ENCODE measurements at regions of chr1 and their contacts with region 1.

Region 1: DNA sequence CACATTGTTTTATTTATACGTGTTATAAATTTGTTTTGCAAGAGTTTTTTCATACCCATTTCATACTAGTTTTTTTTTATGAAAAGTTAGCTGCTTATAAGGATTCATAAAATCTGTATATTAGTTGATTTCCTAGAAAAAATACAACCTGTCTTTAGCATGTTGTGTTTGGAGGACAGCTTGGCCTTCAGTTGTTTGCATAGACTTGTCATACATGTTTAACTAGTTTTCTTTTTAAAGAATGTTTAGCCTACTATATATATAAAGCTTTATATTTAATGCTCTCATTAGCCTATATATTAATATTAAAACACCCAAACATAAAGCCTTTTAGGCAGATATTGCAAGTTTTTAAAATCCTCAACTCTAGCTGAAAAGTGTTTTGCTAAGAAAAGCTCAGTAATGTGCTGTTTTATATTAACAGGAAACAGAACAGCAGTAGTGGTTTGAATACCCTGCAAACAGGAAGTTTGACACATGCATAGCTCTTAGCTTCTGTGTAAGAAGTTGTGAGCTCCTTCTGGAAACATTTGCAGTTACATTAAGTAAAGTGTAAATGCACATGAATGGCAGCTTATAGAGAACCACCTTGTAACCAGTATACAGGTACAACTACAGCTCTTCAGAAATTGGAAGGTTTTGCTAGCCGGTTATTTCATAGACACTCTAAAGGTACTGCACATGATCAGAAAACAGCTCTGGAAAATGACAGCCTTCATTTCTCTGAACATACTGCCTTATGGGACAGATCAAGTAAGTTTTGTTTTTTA is at the start of gene PRKACB:
- H3K4me3 Mint-ChIP-seq: peak within 1 kb of the TSS; percentile 73
- H3K27ac Mint-ChIP-seq: peak within 1 kb of the TSS; percentile 86
- H3K4me1 Mint-ChIP-seq: peaks cover 9% of the 10 kb centered on the region
- H3K27me3 Mint-ChIP-seq: no peaks in the 10 kb centered on the region

Region 2: GRCh38 chr1:83619170-83619896 is 524.6 kb before region 1 on chr1:
- intact Hi-C with region 1: no loop called
- H3K4me3 Mint-ChIP-seq: no peak overlapping the region
- H3K27ac Mint-ChIP-seq: no peak overlapping the region
- H3K4me1 Mint-ChIP-seq: no peaks in the 10 kb centered on the region
- H3K27me3 Mint-ChIP-seq: no peaks in the 10 kb centered on the region

Region 3: DNA sequence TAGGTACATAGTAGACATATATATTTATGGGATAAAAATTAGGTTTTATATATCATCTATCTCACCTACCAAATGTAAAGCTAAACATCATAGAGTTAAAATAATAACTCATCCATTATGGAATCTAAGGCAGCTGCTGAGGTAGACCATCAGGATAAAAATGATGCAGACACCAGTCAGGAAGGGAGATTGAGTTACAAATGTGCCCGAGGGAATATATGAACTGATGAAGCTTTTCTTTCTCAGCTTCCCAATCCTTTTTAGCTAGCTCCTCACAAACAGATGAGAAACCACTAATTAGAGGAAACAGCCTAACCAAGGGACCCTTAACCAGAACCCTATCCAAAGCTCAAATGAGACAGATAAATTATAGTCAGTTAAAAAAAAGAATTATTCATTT is 165.9 kb before region 1 on chr1:
- intact Hi-C with region 1: no loop called
- H3K4me3 Mint-ChIP-seq: no peak overlapping the region
- H3K27ac Mint-ChIP-seq: no peak overlapping the region
- H3K4me1 Mint-ChIP-seq: no peaks in the 10 kb centered on the region
- H3K27me3 Mint-ChIP-seq: no peaks in the 10 kb centered on the region

Region 4: DNA sequence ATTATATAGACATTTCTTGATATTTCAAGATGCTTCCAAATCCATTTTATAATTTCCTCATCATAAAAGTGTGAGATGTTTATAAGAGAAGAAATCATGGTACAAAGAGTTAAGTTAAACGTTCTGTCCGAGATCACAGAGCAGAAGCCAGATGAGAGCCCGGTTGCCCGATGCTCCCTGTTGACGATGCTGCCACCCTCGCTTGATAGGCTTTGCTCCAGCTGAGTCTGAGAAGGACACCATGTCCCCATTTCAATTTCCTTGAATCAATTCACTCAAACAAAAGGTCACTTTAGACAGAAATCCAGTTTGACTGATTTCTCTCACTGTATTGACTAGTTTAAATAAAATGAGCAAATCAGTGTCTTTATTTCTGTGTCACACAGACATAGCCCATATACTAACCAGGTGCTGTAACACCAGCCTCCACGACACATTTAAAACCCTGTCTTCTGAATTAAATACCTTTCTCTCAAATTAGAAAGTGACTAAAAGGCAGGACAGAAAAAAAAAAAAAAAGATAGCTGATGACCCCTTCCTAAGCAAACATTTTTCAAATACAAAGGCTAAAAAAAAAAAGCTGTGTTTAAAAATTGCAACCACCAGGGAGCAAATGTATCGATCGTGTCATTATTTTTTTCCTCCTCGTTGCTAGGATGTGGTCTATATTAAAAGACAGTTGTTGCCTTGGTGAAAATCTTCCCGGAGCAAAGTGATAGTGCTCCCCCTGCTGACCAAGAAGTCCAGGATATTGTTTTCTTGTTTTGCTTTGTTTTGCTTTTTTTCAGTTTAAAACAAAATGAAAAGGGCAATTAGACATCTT is 289.5 kb after region 1 on chr1:
- intact Hi-C with region 1: loop called (anchors 1 kb)
- H3K4me3 Mint-ChIP-seq: peak overlapping the region; percentile 37
- H3K27ac Mint-ChIP-seq: peak overlapping the region; percentile 71
- H3K4me1 Mint-ChIP-seq: peaks cover 30% of the 10 kb centered on the region
- H3K27me3 Mint-ChIP-seq: no peaks in the 10 kb centered on the region

Region 5: GRCh38 chr1:84620720-84621313 is 476.8 kb after region 1 on chr1:
- intact Hi-C with region 1: loop called (anchors 2 kb)
- H3K4me3 Mint-ChIP-seq: peak overlapping the region; percentile 88
- H3K27ac Mint-ChIP-seq: peak overlapping the region; percentile 91
- H3K4me1 Mint-ChIP-seq: peaks cover 30% of the 10 kb centered on the region
- H3K27me3 Mint-ChIP-seq: no peaks in the 10 kb centered on the region

Region 6: GRCh38 chr1:84753516-84754385 is 609.8 kb after region 1 on chr1:
- intact Hi-C with region 1: loop called (anchors 5 kb)
- H3K4me3 Mint-ChIP-seq: no peak overlapping the region
- H3K27ac Mint-ChIP-seq: no peak overlapping the region
- H3K4me1 Mint-ChIP-seq: peaks cover 5% of the 10 kb centered on the region
- H3K27me3 Mint-ChIP-seq: peaks cover 9% of the 10 kb centered on the region

Region 7: DNA sequence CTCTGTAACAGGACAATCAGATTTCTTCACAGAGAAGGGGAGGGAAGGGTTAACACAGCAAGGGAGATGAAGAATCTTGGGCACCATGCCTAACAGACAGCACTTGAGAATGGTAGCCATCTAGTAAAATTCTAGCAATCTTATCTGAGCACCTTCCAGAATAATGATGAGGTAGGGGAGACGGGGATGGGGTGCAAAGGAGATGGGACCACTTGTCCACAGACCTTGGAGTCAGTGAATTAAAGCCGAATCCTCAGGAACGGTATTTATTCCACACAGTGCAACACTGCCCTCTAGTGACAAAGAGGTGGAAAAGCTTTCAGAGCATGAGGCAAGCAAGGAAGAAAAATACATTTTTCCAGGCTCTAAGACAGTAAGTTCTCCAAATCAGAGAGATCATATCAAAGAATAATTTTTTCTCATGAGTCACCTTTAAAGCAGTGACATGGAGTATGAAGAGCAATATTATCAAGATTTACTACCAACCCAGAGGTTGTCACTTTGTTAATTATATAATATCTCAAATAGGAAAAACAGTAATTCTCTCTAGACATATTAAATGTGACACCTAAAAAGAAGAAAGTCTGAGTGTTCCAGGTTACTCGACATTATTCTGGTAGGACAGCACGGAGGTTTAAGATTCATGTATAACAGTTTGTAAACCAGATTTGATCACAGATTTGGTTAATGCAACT is 792.3 kb after region 1 on chr1:
- intact Hi-C with region 1: loop called (anchors 5 kb)
- H3K4me3 Mint-ChIP-seq: no peak overlapping the region
- H3K27ac Mint-ChIP-seq: no peak overlapping the region
- H3K4me1 Mint-ChIP-seq: no peaks in the 10 kb centered on the region
- H3K27me3 Mint-ChIP-seq: no peaks in the 10 kb centered on the region

Measured in dendritic cell treated with granulocyte-macrophage colony-stimulating factor and Interleukin-4, amounts not matched to agents 40 ng/mL and 50 ng/mL, for 4 days (primary cell).